Caco-2 (cell line): ENCODE measurements at regions of chr14 and their contacts with region 1.

Region 1: DNA sequence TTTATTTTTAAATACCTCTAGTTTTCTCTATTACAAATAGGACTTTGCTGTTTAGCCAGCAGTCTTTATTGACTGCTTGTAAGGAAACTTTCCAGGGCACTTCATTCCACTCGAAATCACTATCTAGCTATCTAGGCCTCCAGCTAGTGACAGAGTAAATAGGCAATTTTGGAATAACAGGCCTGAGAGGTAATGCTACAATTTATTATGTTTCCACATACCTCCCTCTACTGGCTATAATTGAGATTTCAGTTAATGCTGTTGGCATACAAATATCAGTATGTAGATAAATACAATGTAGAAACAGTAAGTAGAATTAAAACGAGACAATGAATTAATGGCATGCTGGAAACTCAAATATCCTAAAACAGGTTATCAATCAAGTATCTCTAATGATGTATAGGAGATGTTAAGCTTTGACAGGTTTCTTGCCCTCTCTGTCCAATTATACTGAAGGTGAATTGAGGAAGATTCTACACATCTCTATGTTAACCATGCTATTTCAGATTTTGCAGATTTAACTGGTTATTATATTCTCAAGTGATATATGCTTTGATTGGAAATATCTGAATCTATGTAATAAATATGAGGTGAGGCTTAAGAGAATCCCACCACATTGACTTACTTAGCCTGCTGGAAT is 7.2 kb downstream of the DTD2 start:
- DNase-seq: peak in 1 of 2 experiments; percentile 44
- H3K4me3 ChIP-seq: no peak overlapping the region
- H3K4me3 Mint-ChIP-seq: no peak overlapping the region
- H3K27ac Mint-ChIP-seq: no peak overlapping the region
- H3K4me1 ChIP-seq: no peaks in the 10 kb centered on the region
- H3K4me1 Mint-ChIP-seq: no peaks in the 10 kb centered on the region
- H3K27me3 ChIP-seq: no peaks in the 10 kb centered on the region
- H3K27me3 Mint-ChIP-seq: no peaks in the 10 kb centered on the region
- CTCF ChIP-seq: peak; percentile 39 to 47

Region 2: GRCh38 chr14:31388687-31389413 is 61.2 kb before region 1 on chr14:
- CTCF ChIA-PET with region 1: no interaction called
- POLR2A ChIA-PET with region 1: no interaction called
- intact Hi-C with region 1: loop called (anchors 1 kb)
- DNase-seq: no peak
- H3K4me3 ChIP-seq: no peak overlapping the region
- H3K4me3 Mint-ChIP-seq: no peak overlapping the region
- H3K27ac Mint-ChIP-seq: no peak overlapping the region
- H3K4me1 ChIP-seq: no peaks in the 10 kb centered on the region
- H3K4me1 Mint-ChIP-seq: no peaks in the 10 kb centered on the region
- H3K27me3 ChIP-seq: no peaks in the 10 kb centered on the region
- H3K27me3 Mint-ChIP-seq: no peaks in the 10 kb centered on the region
- CTCF ChIP-seq: no peak